ENCODE measurements at regions of chr16 and their contacts with region 1.

Region 1: DNA sequence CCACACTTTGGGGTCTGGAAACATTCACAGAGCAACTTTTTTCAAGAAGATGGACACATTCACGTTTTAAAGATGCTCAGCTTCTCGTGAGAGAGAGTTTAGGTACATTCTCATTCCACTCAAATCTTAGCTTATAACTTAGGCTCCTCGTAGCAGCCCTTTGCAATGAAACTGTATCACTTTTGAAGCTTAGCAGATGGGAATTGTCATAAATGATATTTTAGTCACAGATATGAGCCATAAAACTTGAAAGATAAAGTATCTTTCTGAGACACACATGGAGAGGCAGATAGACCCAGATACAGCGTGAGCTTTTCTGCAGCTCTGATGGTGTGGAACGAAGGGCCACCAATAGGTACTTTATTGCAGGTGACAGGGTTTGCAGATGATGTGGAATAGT is 41.1 kb downstream of the RBFOX1 start:
- DNase-seq: no peak
- ATAC-seq: no peak
- H3K4me3 ChIP-seq: no peak overlapping the region
- H3K27ac ChIP-seq: no peak overlapping the region
- H3K4me1 ChIP-seq: no peaks in the 10 kb centered on the region
- H3K27me3 ChIP-seq: no peaks in the 10 kb centered on the region
- CTCF ChIP-seq: no peak

Region 2: DNA sequence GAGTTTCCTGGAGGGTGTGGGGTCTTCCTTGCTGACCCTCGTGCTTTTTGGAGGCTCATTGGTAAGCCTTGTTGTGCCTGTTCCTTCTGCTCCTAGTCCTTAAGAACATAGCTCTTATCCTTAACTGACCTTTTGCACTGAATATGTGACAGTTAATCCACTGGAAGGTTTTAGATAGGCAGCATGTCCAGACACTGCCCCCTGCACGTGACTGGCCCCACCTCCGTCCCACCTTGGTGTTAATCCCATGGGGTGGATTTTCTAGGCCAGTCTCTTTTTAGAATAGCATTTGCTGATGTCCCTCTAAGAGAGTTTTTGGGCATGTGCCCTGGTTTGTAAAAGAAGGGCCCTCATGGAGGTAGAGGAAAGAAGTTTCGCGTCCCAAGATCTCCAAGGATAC is 17.2 kb after region 1 on chr16:
- CTCF ChIA-PET with region 1: no interaction called
- POLR2A ChIA-PET with region 1: interaction called, 14 read pairs
- in situ Hi-C with region 1: no loop called
- intact Hi-C with region 1: no loop called
- DNase-seq: no peak
- ATAC-seq: no peak
- H3K4me3 ChIP-seq: no peak overlapping the region
- H3K27ac ChIP-seq: no peak overlapping the region
- H3K4me1 ChIP-seq: no peaks in the 10 kb centered on the region
- H3K27me3 ChIP-seq: no peaks in the 10 kb centered on the region
- CTCF ChIP-seq: no peak

Region 3: DNA sequence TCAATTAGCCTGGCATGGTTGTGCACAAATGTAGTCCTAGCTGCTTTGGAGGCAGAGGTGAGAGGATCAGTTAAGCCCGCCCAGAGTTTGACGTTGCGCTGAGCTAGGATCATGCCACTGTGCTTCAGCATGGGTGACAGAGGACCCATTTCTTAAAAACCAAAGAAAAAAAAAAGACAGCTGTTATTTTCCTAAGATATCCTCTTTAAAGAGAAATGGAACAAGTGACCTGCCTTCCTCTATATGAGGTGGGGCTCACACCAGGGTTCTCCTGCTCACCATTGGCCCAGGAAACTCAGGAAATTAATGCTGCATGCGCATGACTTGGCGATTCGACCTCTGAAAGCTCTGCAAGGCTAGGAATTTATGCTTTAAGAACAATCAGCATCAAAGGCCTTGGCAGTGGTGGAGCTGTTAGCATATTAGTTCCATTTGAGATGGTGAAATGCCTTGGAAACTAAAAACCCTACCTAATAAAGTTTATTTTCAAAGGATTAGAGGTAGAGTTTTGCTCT is 67.2 kb after region 1 on chr16:
- CTCF ChIA-PET with region 1: no interaction called
- POLR2A ChIA-PET with region 1: no interaction called
- in situ Hi-C with region 1: no loop called
- intact Hi-C with region 1: no loop called
- DNase-seq: no peak
- ATAC-seq: no peak
- H3K4me3 ChIP-seq: no peak overlapping the region
- H3K27ac ChIP-seq: no peak overlapping the region
- H3K4me1 ChIP-seq: no peaks in the 10 kb centered on the region
- H3K27me3 ChIP-seq: no peaks in the 10 kb centered on the region
- CTCF ChIP-seq: no peak

Region 4: GRCh38 chr16:7653746-7654461 is 280.1 kb after region 1 on chr16:
- CTCF ChIA-PET with region 1: no interaction called
- POLR2A ChIA-PET with region 1: no interaction called
- in situ Hi-C with region 1: no loop called
- intact Hi-C with region 1: no loop called
- DNase-seq: no peak
- ATAC-seq: no peak
- H3K4me3 ChIP-seq: no peak overlapping the region
- H3K27ac ChIP-seq: no peak overlapping the region
- H3K4me1 ChIP-seq: no peaks in the 10 kb centered on the region
- H3K27me3 ChIP-seq: no peaks in the 10 kb centered on the region
- CTCF ChIP-seq: no peak